Naive thymus-derived CD4-positive, alpha-beta T cell (primary cell): ENCODE measurements at regions of chr17 and their contacts with region 1.

Region 1: DNA sequence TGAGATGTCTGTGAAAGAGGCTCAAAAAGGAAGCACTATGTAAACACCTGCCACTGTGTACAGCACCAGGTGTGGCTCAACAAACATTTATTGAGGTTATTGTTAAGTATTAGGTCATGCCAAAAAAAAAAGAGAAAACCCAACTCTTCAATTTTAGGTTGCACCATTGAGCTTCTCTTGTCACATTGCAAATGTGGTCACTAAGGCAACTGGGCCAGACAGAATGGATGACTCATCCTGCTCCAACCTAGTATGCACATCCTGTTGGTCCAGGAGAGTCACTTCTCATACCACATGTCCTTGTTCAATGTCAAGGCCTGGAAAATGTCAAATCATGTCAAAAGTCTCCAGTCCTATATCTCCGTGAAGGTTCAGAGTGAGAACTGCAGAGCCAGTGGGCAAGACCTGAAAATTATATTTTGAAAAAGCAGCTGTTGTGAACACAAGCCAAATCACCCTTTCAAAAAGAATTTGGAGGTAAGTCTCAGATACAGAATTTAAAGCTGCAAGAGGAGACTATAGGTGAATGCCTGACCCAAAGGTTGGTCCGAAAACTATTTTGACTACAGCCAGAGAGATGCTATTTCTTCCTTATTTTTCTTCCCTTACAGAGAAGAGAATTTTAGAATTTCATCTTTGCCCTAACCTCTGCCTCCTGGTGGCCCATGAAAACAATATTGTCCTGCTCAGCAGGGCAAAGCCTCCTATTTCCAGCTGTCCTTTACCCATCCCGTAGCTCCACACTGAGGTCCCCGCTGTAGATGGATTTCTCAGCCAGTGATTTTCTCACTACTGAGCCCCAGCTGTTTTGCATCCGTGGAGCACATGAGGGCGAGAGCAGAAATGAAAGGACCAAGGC is 24.8 kb downstream of the HOXB1 start:
- DNase-seq: peak in 2 of 9 donors; percentile 30 to 33
- ATAC-seq: peak; percentile 89
- H3K4me3 ChIP-seq: no peak overlapping the region
- H3K4me3 Mint-ChIP-seq: peak overlapping the region in 1 of 10 donors; percentile 46
- H3K27ac ChIP-seq: no peak overlapping the region
- H3K27ac Mint-ChIP-seq: peak overlapping the region in 3 of 9 donors; percentile 18 to 91 (median 20)
- H3K4me1 ChIP-seq: peaks cover 0 to 5% of the 10 kb centered on the region in 2 donors
- H3K4me1 Mint-ChIP-seq: peaks cover 0 to 62% (median 6%) of the 10 kb centered on the region in 7 donors
- H3K27me3 ChIP-seq: no peaks in the 10 kb centered on the region
- H3K27me3 Mint-ChIP-seq: peaks cover 6 to 29% (median 24%) of the 10 kb centered on the region in 5 donors

Region 2: GRCh38 chr17:48441231-48441711 is 64.7 kb before region 1 on chr17:
- CTCF ChIA-PET with region 1: no interaction called
- POLR2A ChIA-PET with region 1: no interaction called
- intact Hi-C with region 1: loop called in 1 of 2 experiments (anchors 1 kb)
- DNase-seq: peak in 7 of 9 donors; percentile 74 to 88 (median 86)
- ATAC-seq: peak; percentile 80
- H3K4me3 ChIP-seq: peak overlapping the region; percentile 28
- H3K4me3 Mint-ChIP-seq: peak overlapping the region; percentile 61 to 86 (median 76)
- H3K27ac ChIP-seq: peak overlapping the region; percentile 63
- H3K27ac Mint-ChIP-seq: peak overlapping the region; percentile 69 to 96 (median 95)
- H3K4me1 ChIP-seq: peaks cover 93 to 95% of the 10 kb centered on the region in 2 donors
- H3K4me1 Mint-ChIP-seq: peaks cover 80 to 97% (median 94%) of the 10 kb centered on the region in 7 donors
- H3K27me3 ChIP-seq: no peaks in the 10 kb centered on the region
- H3K27me3 Mint-ChIP-seq: no peaks in the 10 kb centered on the region

Region 3: GRCh38 chr17:48492401-48493298 is 13.4 kb before region 1 on chr17:
- CTCF ChIA-PET with region 1: interaction called, 5 read pairs
- POLR2A ChIA-PET with region 1: no interaction called
- intact Hi-C with region 1: loop called in 1 of 2 experiments (anchors 2 kb)
- DNase-seq: peak; percentile 38 to 73 (median 58)
- ATAC-seq: peak; percentile 95
- H3K4me3 ChIP-seq: peak overlapping the region; percentile 54
- H3K4me3 Mint-ChIP-seq: peak overlapping the region; percentile 6 to 79 (median 58)
- H3K27ac ChIP-seq: no peak overlapping the region
- H3K27ac Mint-ChIP-seq: peak overlapping the region in 1 of 9 donors; percentile 88
- H3K4me1 ChIP-seq: peaks cover 6 to 7% of the 10 kb centered on the region in 2 donors
- H3K4me1 Mint-ChIP-seq: peaks cover 0 to 58% (median 7%) of the 10 kb centered on the region in 7 donors
- H3K27me3 ChIP-seq: no peaks in the 10 kb centered on the region
- H3K27me3 Mint-ChIP-seq: peaks cover 6 to 26% (median 16%) of the 10 kb centered on the region in 5 donors

Region 4: DNA sequence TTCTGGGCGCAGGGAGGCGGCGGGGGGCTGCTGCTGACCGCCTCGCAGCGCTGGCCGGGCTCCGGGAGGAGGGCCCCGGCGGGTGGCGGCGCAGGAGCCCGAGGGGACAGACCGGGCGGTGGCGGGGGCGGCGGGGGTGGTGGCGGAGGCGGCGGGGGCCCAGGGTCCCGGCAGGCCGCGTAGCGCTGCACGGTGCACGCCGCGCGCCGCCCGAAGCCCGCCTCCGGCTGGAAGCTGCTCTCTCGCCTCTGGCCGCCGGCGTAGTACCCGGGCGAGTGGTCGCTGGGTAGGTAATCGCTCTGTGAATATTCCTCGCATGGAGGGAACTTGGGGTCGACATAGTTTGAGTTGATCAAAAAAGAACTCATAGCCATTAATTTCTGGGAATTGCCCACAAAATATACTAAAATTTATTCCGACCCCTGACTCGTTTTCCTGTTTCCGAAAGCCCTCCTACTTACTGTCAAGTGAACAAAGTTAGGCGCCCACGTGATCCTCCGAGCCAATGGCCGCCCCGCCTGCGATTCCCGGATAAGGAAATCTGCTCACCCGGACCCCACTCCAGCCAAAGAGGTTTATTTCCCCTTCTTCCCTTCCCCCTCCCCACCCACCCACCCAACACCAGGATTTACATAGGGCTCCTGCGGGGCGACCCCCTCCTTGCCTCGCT is 72.1 kb after region 1 on chr17 and contains the start of gene HOXB4:
- CTCF ChIA-PET with region 1: interaction called, 3 read pairs
- POLR2A ChIA-PET with region 1: no interaction called
- intact Hi-C with region 1: loop called in 1 of 2 experiments (anchors 5 kb)
- DNase-seq: peak in 6 of 9 donors; percentile 51 to 74 (median 57)
- ATAC-seq: peak; percentile 83
- H3K4me3 ChIP-seq: peak within 1 kb of the TSS; percentile 78
- H3K4me3 Mint-ChIP-seq: peak within 1 kb of the TSS; percentile 88 to 94 (median 90)
- H3K27ac ChIP-seq: no peak within 1 kb of the TSS
- H3K27ac Mint-ChIP-seq: peak within 1 kb of the TSS; percentile 26 to 89 (median 66)
- H3K4me1 ChIP-seq: peaks cover 15 to 27% of the 10 kb centered on the region in 2 donors
- H3K4me1 Mint-ChIP-seq: peaks cover 12 to 62% (median 52%) of the 10 kb centered on the region in 7 donors
- H3K27me3 ChIP-seq: peaks cover 6 to 36% of the 10 kb centered on the region in 2 donors
- H3K27me3 Mint-ChIP-seq: peaks cover 44 to 70% (median 49%) of the 10 kb centered on the region in 5 donors
- total RNA-seq, gene HOXB4: 0.34 to 7.9 (median 2.4) TPM